ENCODE measurements at regions of chr6 and their contacts with region 1.

Region 1: DNA sequence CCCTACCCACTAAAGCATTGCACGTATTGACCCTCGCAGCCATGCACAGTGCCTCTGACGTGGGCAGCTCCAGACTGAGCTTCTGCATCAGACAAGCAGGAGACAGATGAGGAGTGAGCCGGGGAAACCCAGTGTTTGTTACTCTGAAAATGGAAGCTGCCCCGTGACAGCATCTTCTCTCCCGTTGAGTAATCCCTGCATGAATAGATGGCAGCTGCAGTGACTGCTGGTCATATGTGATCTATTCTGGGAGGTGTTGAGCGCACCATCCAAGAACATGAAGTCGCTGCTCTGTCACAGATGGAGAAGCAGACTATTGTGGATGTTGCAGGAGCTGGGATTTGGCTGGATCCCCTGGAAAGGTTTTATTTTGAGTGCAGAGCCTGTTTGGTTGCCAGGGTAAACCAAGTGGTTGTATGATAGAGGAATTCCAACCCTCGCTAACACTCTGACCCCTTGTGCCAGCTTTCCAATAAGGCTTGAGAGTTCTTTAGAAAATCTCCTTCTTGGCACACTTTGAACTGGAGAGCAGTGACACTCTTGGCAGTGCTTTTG is 242.2 kb downstream of the NRN1 start:
- DNase-seq: no peak
- ATAC-seq: peak; percentile 90

Region 2: GRCh38 chr6:5471044-5471443 is 293.4 kb before region 1 on chr6:
- intact Hi-C with region 1: loop called (anchors 5 kb)
- DNase-seq: no peak
- ATAC-seq: peak; percentile 70

Region 3: DNA sequence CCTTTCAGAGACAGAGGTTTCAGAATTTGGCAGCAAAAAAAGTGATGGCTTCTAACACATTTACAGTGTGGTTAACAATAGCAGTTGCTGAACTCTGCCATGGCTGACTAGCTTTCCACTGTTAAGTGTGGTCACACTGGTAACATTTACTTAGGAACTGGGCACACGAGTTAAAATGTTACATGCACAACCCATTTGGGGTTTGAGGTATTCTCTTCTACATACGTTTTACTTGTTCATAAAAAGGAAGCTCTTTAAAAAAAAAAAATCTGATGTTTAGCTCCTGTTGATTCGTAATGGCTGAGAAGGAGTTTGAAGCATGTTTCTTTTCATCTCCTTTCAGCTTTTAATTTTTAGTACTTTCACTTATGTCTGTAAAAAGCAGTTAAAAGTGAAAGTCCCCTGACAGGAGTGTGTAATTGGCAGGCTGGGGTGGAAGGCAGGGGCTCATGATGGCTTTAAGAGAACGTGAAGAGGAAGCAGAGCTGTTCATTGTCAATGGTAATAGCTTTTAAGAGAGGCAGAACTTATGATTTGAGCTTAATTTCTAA is 257.3 kb before region 1 on chr6:
- intact Hi-C with region 1: loop called (anchors 10 kb)
- DNase-seq: no peak
- ATAC-seq: no peak

Region 4: GRCh38 chr6:5590187-5590586 is 174.3 kb before region 1 on chr6:
- intact Hi-C with region 1: loop called (anchors 10 kb)
- DNase-seq: peak; percentile 79
- ATAC-seq: peak; percentile 94

Region 5: DNA sequence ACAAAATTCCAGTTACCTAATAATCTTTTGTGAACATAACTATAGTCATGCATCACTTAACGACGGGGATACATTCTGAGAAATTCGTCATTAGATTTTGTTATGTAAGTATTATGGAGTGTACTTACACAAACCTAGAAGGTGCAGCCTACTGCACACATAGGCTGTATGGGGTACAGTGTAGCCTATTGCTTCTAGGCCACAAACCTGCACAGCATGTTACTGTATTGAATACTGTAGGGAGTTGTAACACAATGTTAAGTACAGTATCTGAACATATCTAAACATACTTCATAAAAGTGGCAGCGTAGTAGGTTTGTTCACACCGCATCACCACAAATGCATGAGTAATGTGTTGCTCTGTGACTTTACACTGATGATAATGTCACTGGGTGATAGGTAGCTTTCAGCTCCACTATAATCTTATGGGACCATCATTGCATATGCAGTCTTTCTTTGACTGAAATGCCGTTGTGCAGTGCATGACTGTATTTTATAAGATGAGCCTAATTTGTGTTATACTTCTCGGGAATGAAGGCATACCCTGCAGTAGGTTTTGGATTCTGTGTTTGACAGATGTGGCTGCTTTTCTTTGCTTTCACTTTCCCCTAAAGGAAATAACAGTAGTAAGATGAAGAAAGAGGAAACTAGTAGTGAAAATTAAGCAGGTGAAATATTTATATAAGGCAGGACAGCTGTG is 137.6 kb before region 1 on chr6:
- intact Hi-C with region 1: loop called (anchors 10 kb)
- DNase-seq: no peak
- ATAC-seq: no peak

Region 6: DNA sequence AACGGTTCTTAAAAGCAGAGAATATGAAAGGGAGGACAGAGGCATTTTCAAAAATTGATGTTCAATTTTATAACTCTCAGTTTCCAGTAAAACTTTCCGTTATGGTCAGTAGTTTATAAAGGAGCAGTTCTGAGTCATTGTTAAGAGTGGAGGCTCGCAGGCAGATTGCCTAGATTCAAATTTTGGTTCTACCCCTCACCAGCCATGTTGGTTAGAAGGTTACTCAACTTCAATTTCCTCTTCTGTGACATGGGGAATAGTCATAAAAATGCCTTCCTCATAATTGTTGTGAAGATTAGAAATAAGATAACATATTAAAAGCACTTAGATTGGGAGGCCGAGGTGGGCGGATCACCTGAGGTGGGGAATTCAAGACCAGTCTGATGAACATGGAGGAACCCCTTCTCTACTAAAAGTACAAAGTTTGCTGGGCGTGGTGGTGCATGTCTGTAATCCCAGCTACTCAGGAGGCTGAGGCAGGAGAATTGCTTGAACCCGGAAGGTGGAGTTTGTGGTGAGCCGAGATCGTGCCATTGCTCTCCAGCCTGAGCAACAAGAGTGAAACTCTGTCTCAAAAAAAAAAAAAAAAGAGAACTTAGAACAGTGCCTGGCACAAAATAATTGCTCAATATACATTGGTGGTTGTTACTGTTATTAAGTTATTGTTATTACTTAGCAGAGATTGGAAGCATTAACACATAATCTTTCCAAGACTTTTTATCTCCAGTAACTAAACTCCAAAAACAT is 106.6 kb before region 1 on chr6:
- intact Hi-C with region 1: loop called (anchors 10 kb)
- DNase-seq: no peak
- ATAC-seq: no peak

Measured in Right ventricle myocardium inferior (tissue), 1 donor.